GM10248 (cell line): ENCODE measurements at regions of chr16 and their contacts with region 1.

Region 1: GRCh38 chr16:67816240-67817031 is 9.7 kb downstream of the TSNAXIP1 start:
- DNase-seq: peak; percentile 92
- CTCF ChIP-seq: peak; percentile 100

Region 2: GRCh38 chr16:67719048-67719777 is 97.2 kb before region 1 on chr16 and contains the start of gene GFOD2:
- CTCF ChIA-PET with region 1: interaction called, 15 read pairs
- POLR2A ChIA-PET with region 1: no interaction called
- DNase-seq: peak; percentile 100
- CTCF ChIP-seq: no peak

Region 3: GRCh38 chr16:67800338-67800926 is 16.0 kb before region 1 on chr16:
- CTCF ChIA-PET with region 1: interaction called, 41 read pairs
- POLR2A ChIA-PET with region 1: no interaction called
- DNase-seq: peak; percentile 2
- CTCF ChIP-seq: no peak

Region 4: GRCh38 chr16:67847064-67847861 is 30.8 kb after region 1 on chr16 and contains the start of gene CENPT:
- CTCF ChIA-PET with region 1: interaction called, 18 read pairs
- POLR2A ChIA-PET with region 1: no interaction called
- DNase-seq: peak; percentile 80
- CTCF ChIP-seq: no peak

Region 5: GRCh38 chr16:67883872-67884261 is 67.4 kb after region 1 on chr16:
- CTCF ChIA-PET with region 1: interaction called, 11 read pairs
- POLR2A ChIA-PET with region 1: no interaction called
- DNase-seq: peak; percentile 85
- CTCF ChIP-seq: peak; percentile 88

Region 6: GRCh38 chr16:67935402-67936123 is 119.1 kb after region 1 on chr16:
- CTCF ChIA-PET with region 1: interaction called, 29 read pairs
- POLR2A ChIA-PET with region 1: no interaction called
- DNase-seq: peak; percentile 99
- CTCF ChIP-seq: no peak

Region 7: DNA sequence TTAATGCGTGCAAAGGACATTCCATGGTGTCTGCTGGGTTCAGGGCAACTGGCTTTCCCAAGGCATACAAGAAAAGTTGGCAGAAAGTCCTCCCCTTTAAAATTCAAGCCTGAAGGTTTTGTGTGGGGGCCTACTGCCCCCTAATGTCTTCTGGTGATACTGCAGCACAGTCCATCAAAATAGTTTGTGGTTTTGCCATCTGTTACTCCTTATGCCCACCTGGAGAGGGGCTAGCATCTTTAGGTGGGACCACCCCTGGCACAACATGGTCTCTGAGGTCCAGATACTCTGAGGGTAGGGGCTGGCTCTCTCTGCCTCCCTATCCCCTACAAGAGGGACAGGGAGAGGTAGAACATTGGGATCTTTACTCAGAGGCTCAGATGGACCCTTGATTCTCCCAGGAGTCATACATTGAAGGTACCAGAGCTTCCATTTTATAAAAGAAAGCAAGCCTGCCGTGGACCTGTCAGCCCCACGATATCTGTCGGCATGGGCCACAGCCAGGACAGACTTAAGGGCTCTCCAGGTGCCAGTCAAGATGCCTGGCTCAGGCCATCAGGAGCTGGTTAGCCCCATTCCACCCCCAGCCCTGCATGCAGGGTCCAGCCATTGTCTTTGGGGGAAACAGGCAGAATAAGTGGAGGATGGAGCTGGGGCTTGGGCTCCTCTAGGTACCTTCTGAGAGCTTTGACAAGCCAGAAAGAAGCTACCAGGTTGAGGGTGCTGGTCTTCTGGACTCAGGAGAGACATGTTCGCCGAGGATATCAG is 413.2 kb after region 1 on chr16:
- CTCF ChIA-PET with region 1: interaction called, 12 read pairs
- POLR2A ChIA-PET with region 1: no interaction called
- DNase-seq: peak; percentile 58
- CTCF ChIP-seq: peak; percentile 75